Activated naive CD4-positive, alpha-beta T cell treated with anti-CD3 and anti-CD28 coated beads for 36 hours (primary cell): ENCODE measurements at regions of chr15 and their contacts with region 1.

Region 1: DNA sequence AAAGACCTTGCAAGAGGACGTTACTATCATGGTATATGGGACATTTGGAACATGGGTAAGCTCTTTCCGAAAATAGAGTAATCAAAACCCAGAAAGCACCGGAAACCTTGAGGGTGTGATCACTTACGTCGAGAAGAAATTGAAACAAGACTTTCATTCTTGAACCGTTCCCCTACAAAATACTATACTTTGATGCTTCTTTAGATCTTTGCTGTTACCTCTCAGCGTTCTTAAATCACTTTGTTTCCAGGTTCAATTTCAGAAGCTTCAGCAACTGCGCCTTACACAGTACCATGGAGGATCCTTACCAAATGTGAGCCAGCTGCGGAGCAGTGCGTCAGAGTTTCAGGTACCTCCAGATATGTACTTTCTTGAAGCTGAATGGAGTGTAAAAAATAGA is 10.1 kb downstream of the CRTC3 start:
- DNase-seq: peak; percentile 79
- H3K4me3 Mint-ChIP-seq: peak overlapping the region; percentile 68
- H3K27ac Mint-ChIP-seq: peak overlapping the region; percentile 97
- H3K4me1 Mint-ChIP-seq: peaks cover 81% of the 10 kb centered on the region
- H3K27me3 Mint-ChIP-seq: no peaks in the 10 kb centered on the region

Region 2: GRCh38 chr15:90529371-90530249 is 10.2 kb before region 1 on chr15 and contains the start of gene CRTC3:
- CTCF ChIA-PET with region 1: interaction called, 9 read pairs
- intact Hi-C with region 1: loop called (anchors 1 kb)
- DNase-seq: peak; percentile 63
- H3K4me3 Mint-ChIP-seq: peak within 1 kb of the TSS; percentile 92
- H3K27ac Mint-ChIP-seq: peak within 1 kb of the TSS; percentile 89
- H3K4me1 Mint-ChIP-seq: peaks cover 42% of the 10 kb centered on the region
- H3K27me3 Mint-ChIP-seq: no peaks in the 10 kb centered on the region
- total RNA-seq, gene CRTC3: 40.6 to 42.7 TPM

Region 3: DNA sequence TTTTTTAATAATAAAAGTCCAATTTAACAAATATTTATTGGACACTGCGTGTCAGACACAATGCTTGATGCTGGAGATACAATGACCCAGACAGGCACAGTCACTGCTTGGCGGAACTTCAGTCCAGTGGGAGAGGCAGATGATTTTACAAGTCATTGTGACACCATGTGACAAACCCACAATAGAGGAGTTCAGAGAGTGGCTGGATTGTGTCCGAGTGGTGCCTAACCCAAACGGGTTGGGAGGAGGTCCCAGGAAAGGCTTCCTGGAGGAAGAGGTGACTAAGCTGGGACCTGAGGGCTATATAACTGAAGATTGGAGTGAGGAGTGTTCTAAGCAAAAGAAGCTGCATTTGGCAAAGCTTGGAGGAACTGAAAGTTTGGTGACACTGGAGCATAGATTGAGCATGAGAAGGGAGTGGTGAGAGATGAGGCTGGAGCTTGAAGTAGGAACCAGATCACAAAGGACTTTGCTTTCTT is 31.3 kb after region 1 on chr15:
- CTCF ChIA-PET with region 1: interaction called, 4 read pairs
- intact Hi-C with region 1: loop called (anchors 2 kb)
- DNase-seq: no peak
- H3K4me3 Mint-ChIP-seq: no peak overlapping the region
- H3K27ac Mint-ChIP-seq: peak overlapping the region; percentile 69
- H3K4me1 Mint-ChIP-seq: peaks cover 85% of the 10 kb centered on the region
- H3K27me3 Mint-ChIP-seq: no peaks in the 10 kb centered on the region